Left cardiac atrium (tissue), 4 donors: ENCODE measurements at regions of chr14 and their contacts with region 1.

Region 1: DNA sequence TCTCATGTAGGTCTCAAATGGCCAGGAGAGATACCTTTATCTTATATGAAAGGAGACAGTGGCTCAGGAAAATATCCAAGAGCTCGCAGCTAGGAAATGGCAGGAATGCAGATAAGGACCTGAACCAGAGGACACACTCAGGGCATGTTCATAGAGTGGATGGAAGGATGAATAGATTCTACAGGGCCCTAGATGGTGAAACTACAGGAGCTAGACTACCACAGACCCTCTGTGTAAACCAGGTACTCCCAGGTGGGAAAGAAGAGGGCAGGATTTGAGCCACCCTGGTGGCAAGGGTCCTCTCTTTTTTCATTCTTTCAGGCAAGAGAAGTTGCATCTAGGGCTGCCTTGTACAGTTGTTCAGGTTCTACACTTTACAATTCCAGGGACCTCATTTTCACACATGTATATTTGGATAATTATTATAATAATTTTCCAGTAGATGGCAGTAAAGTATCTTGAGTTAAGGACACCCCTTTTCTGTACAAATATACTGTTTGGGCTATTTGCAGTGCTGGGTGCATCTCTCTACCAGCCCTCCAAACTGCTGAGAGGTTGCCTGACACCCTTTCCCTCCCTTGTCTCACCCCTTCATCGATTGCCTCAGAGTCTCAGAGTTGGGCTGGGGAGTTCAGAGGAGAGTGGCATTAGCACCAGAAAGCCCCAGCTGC is 10.5 kb upstream of the ZDHHC22 start:
- DNase-seq: no peak
- ATAC-seq: peak; percentile 38 to 45

Region 2: GRCh38 chr14:77314043-77314442 is 162.0 kb after region 1 on chr14:
- intact Hi-C with region 1: loop called (anchors 5 to 10 kb)
- DNase-seq: no peak
- ATAC-seq: no peak